H1 (cell line): ENCODE measurements at regions of chr1 and their contacts with region 1.

Region 1: GRCh38 chr1:196148367-196148970 is 459.8 kb downstream of the KCNT2 start:
- DNase-seq: no peak
- H3K4me3 ChIP-seq: no peak overlapping the region
- H3K27ac ChIP-seq: no peak overlapping the region
- H3K4me1 ChIP-seq: peaks cover 0 to 2% (median under 1%) of the 10 kb centered on the region in 4 experiments; a peak in 2 of 7 replicates
- H3K27me3 ChIP-seq: no peaks in the 10 kb centered on the region
- CTCF ChIP-seq: peak in 2 of 3 experiments; percentile 8 to 22; a peak in 2 of 4 replicates
- EP300 ChIP-seq: no peak
- POLR2A ChIP-seq: no peak
- RAD21 ChIP-seq: peak; percentile 50 to 68

Region 2: GRCh38 chr1:195939844-195940243 is 208.6 kb before region 1 on chr1:
- CTCF ChIA-PET with region 1: interaction called, 14 read pairs
- POLR2A ChIA-PET with region 1: interaction called, 3 read pairs
- DNase-seq: peak in 1 of 2 experiments; percentile 10
- H3K4me3 ChIP-seq: no peak overlapping the region
- H3K27ac ChIP-seq: no peak overlapping the region
- H3K4me1 ChIP-seq: peaks cover 0 to 2% (median 0%) of the 10 kb centered on the region in 4 experiments; a peak in 1 of 7 replicates
- H3K27me3 ChIP-seq: no peaks in the 10 kb centered on the region
- CTCF ChIP-seq: peak in 2 of 3 experiments; percentile 36 to 65; a peak in 3 of 4 replicates
- EP300 ChIP-seq: no peak
- POLR2A ChIP-seq: no peak
- RAD21 ChIP-seq: peak; percentile 84

Region 3: DNA sequence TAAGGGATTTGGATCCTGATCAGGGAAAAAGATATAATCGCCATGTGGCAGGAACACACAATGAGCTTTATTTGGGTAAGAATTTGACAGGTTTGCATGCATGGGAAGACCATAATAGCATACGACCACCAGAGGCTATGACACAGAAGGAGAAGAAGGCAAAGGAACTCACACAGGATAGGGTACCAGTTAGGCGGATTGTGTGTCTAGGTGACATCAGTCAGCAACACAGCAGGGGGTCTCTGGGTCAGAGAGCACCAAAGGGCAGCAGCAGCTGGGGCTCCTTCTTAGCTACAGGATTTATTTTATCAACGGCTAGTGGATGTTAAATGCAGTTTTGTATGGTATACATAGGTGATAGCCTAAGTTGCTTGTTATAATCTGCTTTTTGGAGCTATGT is 91.5 kb before region 1 on chr1:
- CTCF ChIA-PET with region 1: no interaction called
- POLR2A ChIA-PET with region 1: no interaction called
- DNase-seq: peak in 1 of 2 experiments; percentile 49
- H3K4me3 ChIP-seq: no peak overlapping the region
- H3K27ac ChIP-seq: no peak overlapping the region
- H3K4me1 ChIP-seq: peaks cover 0 to 3% (median 0%) of the 10 kb centered on the region in 4 experiments; a peak in 2 of 7 replicates
- H3K27me3 ChIP-seq: no peaks in the 10 kb centered on the region
- CTCF ChIP-seq: no peak
- EP300 ChIP-seq: no peak
- POLR2A ChIP-seq: no peak
- RAD21 ChIP-seq: no peak

Region 4: GRCh38 chr1:196180847-196181593 is 32.6 kb after region 1 on chr1:
- CTCF ChIA-PET with region 1: interaction called, 10 read pairs
- POLR2A ChIA-PET with region 1: no interaction called
- DNase-seq: peak in 1 of 2 experiments; percentile 3
- H3K4me3 ChIP-seq: no peak overlapping the region
- H3K27ac ChIP-seq: no peak overlapping the region
- H3K4me1 ChIP-seq: no peaks in the 10 kb centered on the region
- H3K27me3 ChIP-seq: no peaks in the 10 kb centered on the region
- CTCF ChIP-seq: no peak
- EP300 ChIP-seq: no peak
- POLR2A ChIP-seq: no peak
- RAD21 ChIP-seq: no peak

Region 5: GRCh38 chr1:196309386-196309785 is 160.9 kb after region 1 on chr1:
- CTCF ChIA-PET with region 1: interaction called, 14 read pairs
- POLR2A ChIA-PET with region 1: no interaction called
- DNase-seq: no peak
- H3K4me3 ChIP-seq: no peak overlapping the region
- H3K27ac ChIP-seq: no peak overlapping the region
- H3K4me1 ChIP-seq: peaks cover 2 to 15% (median 6%) of the 10 kb centered on the region in 4 experiments; a peak in 4 of 7 replicates
- H3K27me3 ChIP-seq: no peaks in the 10 kb centered on the region
- CTCF ChIP-seq: no peak
- EP300 ChIP-seq: no peak
- POLR2A ChIP-seq: no peak
- RAD21 ChIP-seq: no peak; a peak in 1 of 4 replicates

Region 6: GRCh38 chr1:196660852-196661251 is 512.4 kb after region 1 on chr1:
- CTCF ChIA-PET with region 1: interaction called, 10 read pairs
- POLR2A ChIA-PET with region 1: no interaction called
- DNase-seq: no peak
- H3K4me3 ChIP-seq: no peak overlapping the region
- H3K27ac ChIP-seq: no peak overlapping the region
- H3K4me1 ChIP-seq: no peaks in the 10 kb centered on the region
- H3K27me3 ChIP-seq: no peaks in the 10 kb centered on the region
- CTCF ChIP-seq: peak in 2 of 3 experiments; percentile 25 to 34; a peak in 2 of 4 replicates
- EP300 ChIP-seq: no peak
- POLR2A ChIP-seq: no peak
- RAD21 ChIP-seq: peak; percentile 77 to 84